ENCODE measurements at regions of chr3 and their contacts with region 1.

Region 1: DNA sequence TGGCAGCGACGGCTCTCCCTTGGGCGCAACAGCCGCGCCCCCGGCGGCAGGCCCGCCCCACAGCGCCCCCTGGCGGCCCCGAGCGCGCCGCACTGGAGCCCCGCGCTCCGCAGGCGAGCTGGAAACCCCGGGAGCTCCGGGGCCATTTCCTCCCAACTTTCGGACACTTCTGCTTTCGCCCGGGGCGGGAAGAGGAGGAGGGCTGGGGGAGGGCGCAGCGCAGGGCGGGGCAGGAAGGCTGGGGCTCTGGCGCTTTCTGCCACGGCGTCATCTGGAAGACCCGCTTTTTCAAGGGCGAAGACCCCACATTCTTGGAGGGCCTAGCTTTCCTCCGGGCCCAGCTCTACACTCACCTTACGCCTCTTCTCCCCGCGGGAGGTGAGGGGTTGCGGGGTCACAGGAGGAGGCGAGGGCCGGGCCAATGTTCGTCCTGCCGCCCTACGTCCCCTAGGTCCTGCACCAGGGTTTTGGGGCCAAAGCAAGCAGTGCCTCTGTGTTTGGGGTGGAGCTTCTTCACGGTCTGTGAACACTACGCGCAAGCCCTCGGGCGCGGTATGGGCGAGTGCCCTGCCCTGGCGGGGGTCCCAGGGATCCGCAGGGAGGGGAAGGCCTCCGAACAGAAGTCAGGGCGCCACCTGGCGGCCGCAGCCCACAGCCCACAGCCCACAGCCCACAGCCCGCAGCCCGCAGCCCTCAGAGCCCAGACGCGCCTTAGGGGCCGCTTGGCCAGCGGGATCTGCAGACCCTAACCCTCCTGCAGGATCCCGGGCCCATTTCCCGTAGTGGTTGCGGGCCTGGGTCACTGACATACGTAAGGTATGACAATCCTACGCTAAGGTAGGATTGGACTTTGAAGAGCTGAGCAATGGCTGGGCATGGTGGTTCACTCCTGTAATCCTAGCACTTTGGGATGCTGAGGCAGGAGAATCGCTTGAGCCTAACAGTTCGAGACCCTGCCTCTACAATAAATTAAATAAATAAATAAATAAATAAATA is 31.1 kb downstream of the FOXL2 start:
- DNase-seq: peak; percentile 88
- H3K4me3 Mint-ChIP-seq: peak overlapping the region; percentile 78
- H3K27ac Mint-ChIP-seq: no peak overlapping the region
- H3K4me1 Mint-ChIP-seq: peaks cover 5% of the 10 kb centered on the region
- H3K27me3 Mint-ChIP-seq: no peaks in the 10 kb centered on the region

Region 2: GRCh38 chr3:138417559-138417982 is 498.2 kb before region 1 on chr3:
- CTCF ChIA-PET with region 1: interaction called, 24 read pairs
- POLR2A ChIA-PET with region 1: no interaction called
- intact Hi-C with region 1: no loop called
- DNase-seq: peak; percentile 74
- H3K4me3 Mint-ChIP-seq: no peak overlapping the region
- H3K27ac Mint-ChIP-seq: no peak overlapping the region
- H3K4me1 Mint-ChIP-seq: no peaks in the 10 kb centered on the region
- H3K27me3 Mint-ChIP-seq: peaks cover 9% of the 10 kb centered on the region

Region 3: GRCh38 chr3:138678086-138678485 is 237.7 kb before region 1 on chr3:
- CTCF ChIA-PET with region 1: interaction called, 13 read pairs
- POLR2A ChIA-PET with region 1: no interaction called
- intact Hi-C with region 1: no loop called
- DNase-seq: no peak
- H3K4me3 Mint-ChIP-seq: no peak overlapping the region
- H3K27ac Mint-ChIP-seq: no peak overlapping the region
- H3K4me1 Mint-ChIP-seq: no peaks in the 10 kb centered on the region
- H3K27me3 Mint-ChIP-seq: no peaks in the 10 kb centered on the region

Region 4: GRCh38 chr3:138740072-138740471 is 175.7 kb before region 1 on chr3:
- CTCF ChIA-PET with region 1: interaction called, 11 read pairs
- POLR2A ChIA-PET with region 1: no interaction called
- intact Hi-C with region 1: no loop called
- DNase-seq: no peak
- H3K4me3 Mint-ChIP-seq: no peak overlapping the region
- H3K27ac Mint-ChIP-seq: no peak overlapping the region
- H3K4me1 Mint-ChIP-seq: peaks cover 11% of the 10 kb centered on the region
- H3K27me3 Mint-ChIP-seq: no peaks in the 10 kb centered on the region

Region 5: GRCh38 chr3:138834359-138835212 is 81.2 kb before region 1 on chr3 and contains the start of gene PIK3CB:
- CTCF ChIA-PET with region 1: interaction called, 13 read pairs
- POLR2A ChIA-PET with region 1: interaction called, 4 read pairs
- intact Hi-C with region 1: loop called (anchors 1 kb)
- DNase-seq: peak; percentile 90
- H3K4me3 Mint-ChIP-seq: peak within 1 kb of the TSS; percentile 93
- H3K27ac Mint-ChIP-seq: peak within 1 kb of the TSS; percentile 97
- H3K4me1 Mint-ChIP-seq: peaks cover 28% of the 10 kb centered on the region
- H3K27me3 Mint-ChIP-seq: no peaks in the 10 kb centered on the region
- total RNA-seq, gene PIK3CB: 23.0 to 24.8 TPM

Region 6: GRCh38 chr3:138890555-138891187 is 25.1 kb before region 1 on chr3:
- CTCF ChIA-PET with region 1: interaction called, 10 read pairs
- POLR2A ChIA-PET with region 1: no interaction called
- intact Hi-C with region 1: no loop called
- DNase-seq: no peak
- H3K4me3 Mint-ChIP-seq: no peak overlapping the region
- H3K27ac Mint-ChIP-seq: no peak overlapping the region
- H3K4me1 Mint-ChIP-seq: no peaks in the 10 kb centered on the region
- H3K27me3 Mint-ChIP-seq: peaks cover 2% of the 10 kb centered on the region